WTC11 (cell line): ENCODE measurements at regions of chr10 and their contacts with region 1.

Region 1: DNA sequence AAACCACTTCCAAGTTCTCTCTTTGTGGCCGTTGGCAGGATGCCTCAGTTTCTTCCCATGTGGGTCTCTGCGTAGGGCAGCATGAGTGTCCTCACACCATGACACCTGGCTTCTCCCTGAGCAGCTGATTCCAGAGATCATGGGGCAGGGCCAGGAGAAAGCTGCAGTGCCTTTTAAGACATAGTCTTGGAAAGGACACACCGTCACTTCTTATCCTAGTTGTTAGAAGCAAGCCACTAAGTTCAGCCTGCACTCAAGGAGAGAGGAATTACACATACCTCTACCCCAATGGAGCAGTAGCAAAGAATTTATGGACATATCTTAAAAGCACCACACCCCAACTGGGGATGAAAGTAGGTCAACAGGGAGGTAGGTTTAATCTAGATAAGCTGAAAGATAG is 16.4 kb downstream of the NODAL start:
- DNase-seq: no peak
- ATAC-seq: no peak
- H3K4me3 Mint-ChIP-seq: no peak overlapping the region
- H3K27ac Mint-ChIP-seq: no peak overlapping the region
- H3K4me1 Mint-ChIP-seq: peaks cover 45% of the 10 kb centered on the region
- H3K27me3 Mint-ChIP-seq: no peaks in the 10 kb centered on the region
- CTCF ChIP-seq: no peak

Region 2: DNA sequence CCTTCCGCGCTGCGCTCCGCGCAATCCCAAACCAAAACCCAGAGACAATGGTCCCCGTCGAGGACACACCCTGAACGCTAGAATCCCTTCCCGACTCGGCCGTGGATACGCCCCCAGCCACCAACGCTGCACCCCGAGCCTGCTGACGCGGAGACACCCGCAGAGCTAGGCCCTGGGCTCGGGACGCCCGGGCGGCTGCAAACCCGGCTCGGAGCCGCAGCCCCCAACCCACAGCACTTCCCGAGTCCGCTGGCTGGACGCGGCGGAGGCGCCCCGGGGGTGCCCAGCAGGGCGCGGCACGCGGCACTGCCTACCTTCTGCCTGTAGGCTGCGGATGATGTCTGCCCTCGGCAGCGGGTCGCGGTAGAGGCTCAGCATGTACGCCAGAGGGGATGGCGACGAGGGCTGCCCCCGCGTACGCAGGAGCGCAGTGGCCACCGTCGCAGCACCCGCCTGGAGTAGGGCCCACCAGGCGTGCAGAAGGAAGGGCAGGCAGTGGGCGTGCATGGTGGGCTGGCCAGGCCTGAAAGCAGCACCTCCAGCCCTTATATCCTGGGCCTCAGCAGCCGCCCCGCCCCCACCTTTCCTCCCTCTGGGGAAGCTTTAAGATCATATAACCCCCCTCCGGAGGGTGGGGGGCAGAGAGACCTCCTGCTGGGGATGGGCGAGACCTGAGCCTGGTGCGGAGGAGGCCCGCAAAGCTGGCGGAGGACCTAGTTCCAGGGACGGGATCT is 16.2 kb after region 1 on chr10 and contains the start of gene NODAL:
- CTCF ChIA-PET with region 1: interaction called, 10 read pairs
- POLR2A ChIA-PET with region 1: no interaction called
- DNase-seq: peak; percentile 59
- ATAC-seq: peak; percentile 5
- H3K4me3 Mint-ChIP-seq: peak within 1 kb of the TSS; percentile 77
- H3K27ac Mint-ChIP-seq: peak within 1 kb of the TSS; percentile 95
- H3K4me1 Mint-ChIP-seq: peaks cover 72% of the 10 kb centered on the region
- H3K27me3 Mint-ChIP-seq: peaks cover 19% of the 10 kb centered on the region
- CTCF ChIP-seq: no peak
- total RNA-seq, gene NODAL: 41.1 to 57.0 TPM (median 41.5 TPM) in 3 replicates